Dorsolateral prefrontal cortex (tissue), 120 donors: ENCODE measurements at regions of chr17 and their contacts with region 1.

Region 1: GRCh38 chr17:39621523-39622379 is 5.0 kb upstream of the PPP1R1B start:
- DNase-seq: peak; percentile 83 to 95 (median 90)
- H3K4me3 ChIP-seq: peak overlapping the region in 31 of 59 donors; percentile 0 to 45 (median 24)
- H3K27ac ChIP-seq: peak overlapping the region in 53 of 59 donors; percentile 0 to 85 (median 63)
- H3K27me3 ChIP-seq: peaks cover 0 to 21% (median 3%) of the 10 kb centered on the region in 45 donors
- CTCF ChIP-seq: peak; percentile 92 to 100 (median 100)

Region 2: DNA sequence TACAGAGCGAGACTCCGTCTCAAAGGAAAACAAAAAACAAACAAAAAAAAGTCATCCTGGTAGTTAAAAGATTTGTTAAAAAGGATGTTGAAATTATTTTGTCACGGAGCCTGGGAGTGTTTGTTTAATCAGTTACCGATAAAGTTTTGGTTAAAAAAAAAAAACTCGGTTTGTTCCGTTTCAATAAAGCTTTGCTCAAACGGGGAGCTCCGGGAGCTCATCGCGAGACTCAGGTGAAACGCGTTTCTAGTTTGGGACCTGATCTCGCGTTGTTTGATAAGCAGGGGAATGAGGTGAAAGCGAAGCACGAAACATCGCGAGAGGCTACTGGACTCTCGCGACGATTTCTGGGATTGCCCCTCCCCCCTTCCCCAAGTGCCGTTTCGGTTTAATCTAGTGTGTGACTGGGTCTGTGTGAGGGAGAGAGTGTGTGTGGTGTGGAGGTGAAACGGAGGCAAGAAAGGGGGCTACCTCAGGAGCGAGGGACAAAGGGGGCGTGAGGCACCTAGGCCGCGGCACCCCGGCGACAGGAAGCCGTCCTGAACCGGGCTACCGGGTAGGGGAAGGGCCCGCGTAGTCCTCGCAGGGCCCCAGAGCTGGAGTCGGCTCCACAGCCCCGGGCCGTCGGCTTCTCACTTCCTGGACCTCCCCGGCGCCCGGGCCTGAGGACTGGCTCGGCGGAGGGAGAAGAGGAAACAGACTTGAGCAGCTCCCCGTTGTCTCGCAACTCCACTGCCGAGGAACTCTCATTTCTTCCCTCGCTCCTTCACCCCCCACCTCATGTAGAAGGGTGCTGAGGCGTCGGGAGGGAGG is 160.4 kb before region 1 on chr17 and contains the start of gene CDK12:
- intact Hi-C with region 1: no loop called
- DNase-seq: peak; percentile 90 to 99 (median 95)
- H3K4me3 ChIP-seq: peak within 1 kb of the TSS; percentile 61 to 99 (median 91)
- H3K27ac ChIP-seq: peak within 1 kb of the TSS; percentile 79 to 99 (median 95)
- H3K27me3 ChIP-seq: no peaks in the 10 kb centered on the region
- CTCF ChIP-seq: peak in 16 of 56 donors; percentile 7 to 50 (median 20)
- total RNA-seq, gene CDK12: 39.8 to 91.0 (median 63.5) TPM

Region 3: DNA sequence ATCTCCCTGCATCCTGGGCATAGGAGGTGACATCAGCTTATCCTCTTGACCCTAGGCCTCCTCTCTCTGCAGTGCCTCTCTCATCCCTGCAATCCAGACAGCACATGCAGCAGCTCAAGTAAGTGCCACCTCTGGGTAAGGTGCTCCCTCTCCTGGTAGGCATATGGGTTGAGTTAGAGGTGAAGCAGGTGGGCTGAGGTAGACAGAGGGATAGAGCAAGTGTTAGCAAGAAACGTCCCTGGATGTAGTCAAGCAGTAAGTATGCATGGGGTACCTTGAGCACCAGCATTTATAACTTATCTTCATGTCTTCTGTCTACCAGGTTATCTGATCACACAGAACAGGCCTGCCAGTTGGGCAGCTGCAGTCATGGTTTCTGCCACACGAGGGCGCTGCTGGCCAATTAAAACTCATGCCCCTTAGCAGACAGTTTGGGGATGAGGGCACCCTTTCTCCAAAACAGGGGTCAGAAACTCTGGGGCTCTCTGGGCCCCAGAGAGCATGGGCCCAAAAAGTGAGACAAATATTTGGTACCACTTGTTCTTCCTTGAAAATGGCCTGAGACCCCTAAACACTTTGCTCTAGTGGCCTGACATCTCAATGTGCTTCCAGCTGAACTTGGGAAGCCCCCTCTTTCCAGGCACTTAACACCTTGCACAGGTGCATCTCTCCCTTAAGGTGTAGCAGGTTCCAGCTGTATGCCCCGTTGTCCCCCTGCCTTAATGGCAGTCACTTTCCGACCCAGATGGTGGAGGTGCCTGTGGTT is 73.9 kb before region 1 on chr17:
- intact Hi-C with region 1: loop called (anchors 2 to 5 kb)
- DNase-seq: peak; percentile 49 to 82 (median 70)
- H3K4me3 ChIP-seq: no peak overlapping the region
- H3K27ac ChIP-seq: no peak overlapping the region
- H3K27me3 ChIP-seq: no peaks in the 10 kb centered on the region
- CTCF ChIP-seq: peak; percentile 79 to 96 (median 90)

Region 4: DNA sequence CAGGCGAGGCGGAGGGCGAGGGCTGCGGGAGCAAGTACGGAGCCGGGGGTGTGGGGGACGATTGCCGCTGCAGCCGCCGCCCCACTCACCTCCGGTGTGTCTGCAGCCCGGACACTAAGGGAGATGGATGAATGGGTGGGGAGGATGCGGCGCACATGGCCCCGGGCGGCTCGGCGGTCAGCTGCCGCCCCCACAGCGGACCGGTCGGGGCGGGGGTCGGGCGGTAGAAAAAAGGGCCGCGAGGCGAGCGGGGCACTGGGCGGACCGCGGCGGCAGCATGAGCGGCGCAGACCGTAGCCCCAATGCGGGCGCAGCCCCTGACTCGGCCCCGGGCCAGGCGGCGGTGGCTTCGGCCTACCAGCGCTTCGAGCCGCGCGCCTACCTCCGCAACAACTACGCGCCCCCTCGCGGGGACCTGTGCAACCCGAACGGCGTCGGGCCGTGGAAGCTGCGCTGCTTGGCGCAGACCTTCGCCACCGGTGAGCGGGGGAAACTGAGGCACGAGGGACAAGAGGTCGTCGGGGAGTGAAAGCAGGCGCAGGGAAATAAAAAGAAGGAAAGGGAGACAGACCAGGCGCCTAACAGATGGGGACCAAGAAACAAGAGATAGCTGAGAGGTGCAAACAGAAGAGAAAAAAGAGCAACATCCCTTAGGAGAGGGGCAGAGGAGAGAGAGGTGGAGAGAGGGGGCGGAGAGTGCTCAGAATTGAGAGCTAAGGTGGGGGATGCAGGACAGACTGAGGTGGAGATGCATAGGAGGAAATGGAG is 46.6 kb after region 1 on chr17 and contains the start of gene PNMT:
- intact Hi-C with region 1: loop called (anchors 1 to 2 kb)
- DNase-seq: peak in 7 of 10 donors; percentile 36 to 71 (median 59)
- H3K4me3 ChIP-seq: peak within 1 kb of the TSS; percentile 11 to 65 (median 48)
- H3K27ac ChIP-seq: peak within 1 kb of the TSS in 33 of 59 donors; percentile 6 to 84 (median 41)
- H3K27me3 ChIP-seq: peaks cover 0 to 24% (median 0%) of the 10 kb centered on the region in 45 donors
- CTCF ChIP-seq: peak in 54 of 56 donors; percentile 22 to 77 (median 61)
- total RNA-seq, gene PNMT: 1.4 to 15.3 (median 6.7) TPM

Region 5: DNA sequence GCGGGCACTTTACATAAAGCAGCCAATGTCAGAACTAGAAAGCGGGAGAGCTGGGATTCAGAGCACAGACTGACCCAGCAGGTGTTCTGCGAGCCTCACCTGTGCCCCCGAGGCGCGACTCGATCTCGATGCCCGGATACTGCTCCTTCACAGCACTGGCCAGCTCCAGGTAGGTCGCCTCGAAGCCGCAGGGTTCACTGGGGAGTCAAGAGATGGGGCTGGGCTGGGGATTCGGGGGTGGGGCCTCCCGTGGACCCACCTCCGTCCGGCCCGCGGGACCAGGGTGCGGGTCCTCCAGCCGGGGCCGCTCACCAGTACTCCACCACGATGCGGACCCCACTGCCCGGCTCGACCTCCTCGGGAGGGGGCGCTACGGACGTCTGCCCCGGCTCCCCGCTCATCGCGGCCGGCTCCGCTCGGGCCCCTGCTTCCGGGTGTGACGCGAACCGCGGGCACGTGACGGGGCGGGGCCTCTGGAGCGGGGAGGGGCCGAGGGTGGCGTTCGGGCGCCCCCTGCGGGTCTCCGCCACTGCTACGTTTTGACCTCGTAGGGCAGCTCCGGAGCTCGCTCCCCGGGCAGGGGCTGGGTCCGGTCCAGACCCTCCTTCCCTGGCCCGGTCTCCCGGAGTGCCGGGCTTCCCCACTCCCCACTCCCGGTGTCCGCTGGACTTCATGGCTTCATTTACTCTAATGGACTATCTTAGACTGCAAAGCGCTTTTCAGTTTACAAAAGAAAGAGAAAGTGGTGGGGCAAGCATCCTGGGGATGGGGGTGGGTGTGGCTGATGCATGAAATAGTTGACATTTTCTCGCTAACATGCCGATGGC is 108.6 kb after region 1 on chr17 and contains the start of gene MIEN1:
- intact Hi-C with region 1: loop called in 1 of 2 experiments (anchors 5 kb)
- DNase-seq: peak; percentile 88 to 97 (median 92)
- H3K4me3 ChIP-seq: peak within 1 kb of the TSS; percentile 70 to 100 (median 92)
- H3K27ac ChIP-seq: peak within 1 kb of the TSS in 57 of 59 donors; percentile 44 to 95 (median 84)
- H3K27me3 ChIP-seq: no peaks in the 10 kb centered on the region
- CTCF ChIP-seq: peak; percentile 73 to 98 (median 93)
- total RNA-seq, gene MIEN1: 37.4 to 67.6 (median 52.1) TPM

Region 6: GRCh38 chr17:39822051-39822451 is 200.3 kb after region 1 on chr17:
- intact Hi-C with region 1: no loop called
- DNase-seq: no peak
- H3K4me3 ChIP-seq: no peak overlapping the region
- H3K27ac ChIP-seq: no peak overlapping the region
- H3K27me3 ChIP-seq: peaks cover 0 to 12% (median 0%) of the 10 kb centered on the region in 45 donors
- CTCF ChIP-seq: no peak